A549 (cell line): ENCODE measurements at regions of chr16 and their contacts with region 1.

Region 1: GRCh38 chr16:24580665-24581064 is 41.3 kb downstream of the RBBP6 start:
- DNase-seq: peak; percentile 33 to 37
- ATAC-seq: peak in 1 of 2 experiments; percentile 54; a peak in 2 of 6 replicates
- H3K4me3 ChIP-seq: no peak overlapping the region
- H3K27ac ChIP-seq: peak overlapping the region in 1 of 2 experiments; percentile 37; a peak in 3 of 6 replicates
- H3K4me1 ChIP-seq: peaks cover 11% of the 10 kb centered on the region
- CTCF ChIP-seq: peak; percentile 61
- EP300 ChIP-seq: no peak
- POLR2A ChIP-seq: no peak
- RAD21 ChIP-seq: peak; percentile 80 to 85

Region 2: DNA sequence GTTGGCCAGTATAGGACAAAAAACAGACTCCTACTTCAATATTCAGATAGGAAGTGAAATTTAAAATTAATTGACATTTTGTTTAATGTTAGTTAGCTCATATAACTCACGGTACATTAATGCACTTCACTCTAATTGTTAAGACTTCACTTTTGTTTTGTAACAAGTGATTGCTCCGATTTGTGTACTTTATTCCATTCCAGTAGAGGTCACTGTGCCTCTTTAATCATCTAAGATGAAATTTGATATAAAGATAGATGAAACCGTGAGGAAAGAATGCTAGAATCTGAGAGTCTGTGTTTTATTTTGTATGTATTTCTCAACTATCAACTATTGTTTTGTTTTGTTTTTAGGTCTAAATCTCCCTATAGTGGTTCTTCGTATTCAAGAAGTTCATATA is 12.3 kb before region 1 on chr16:
- CTCF ChIA-PET with region 1: interaction called, 10 read pairs
- POLR2A ChIA-PET with region 1: no interaction called
- DNase-seq: peak in 1 of 2 experiments; percentile 53
- ATAC-seq: peak in 1 of 2 experiments; percentile 33; a peak in 1 of 6 replicates
- H3K4me3 ChIP-seq: no peak overlapping the region
- H3K27ac ChIP-seq: no peak overlapping the region
- H3K4me1 ChIP-seq: no peaks in the 10 kb centered on the region
- CTCF ChIP-seq: peak; percentile 65
- EP300 ChIP-seq: no peak
- POLR2A ChIP-seq: no peak
- RAD21 ChIP-seq: peak; percentile 69 to 70

Region 3: GRCh38 chr16:24652209-24652712 is 71.6 kb after region 1 on chr16:
- CTCF ChIA-PET with region 1: no interaction called
- POLR2A ChIA-PET with region 1: no interaction called
- DNase-seq: no peak
- ATAC-seq: no peak
- H3K4me3 ChIP-seq: no peak overlapping the region
- H3K27ac ChIP-seq: peak overlapping the region in 1 of 2 experiments; percentile 59; a peak in 3 of 6 replicates
- H3K4me1 ChIP-seq: peaks cover 18% of the 10 kb centered on the region
- CTCF ChIP-seq: no peak
- EP300 ChIP-seq: no peak
- POLR2A ChIP-seq: no peak
- RAD21 ChIP-seq: no peak

Region 4: GRCh38 chr16:24689145-24689544 is 108.5 kb after region 1 on chr16:
- CTCF ChIA-PET with region 1: interaction called, 31 read pairs
- POLR2A ChIA-PET with region 1: no interaction called
- DNase-seq: peak; percentile 60 to 85
- ATAC-seq: peak; percentile 89 to 91
- H3K4me3 ChIP-seq: no peak overlapping the region
- H3K27ac ChIP-seq: peak overlapping the region; percentile 25 to 67; a peak in 5 of 6 replicates
- H3K4me1 ChIP-seq: peaks cover 18% of the 10 kb centered on the region
- CTCF ChIP-seq: peak; percentile 82
- EP300 ChIP-seq: no peak
- POLR2A ChIP-seq: no peak
- RAD21 ChIP-seq: peak; percentile 78 to 85

Region 5: GRCh38 chr16:24800586-24800985 is 219.9 kb after region 1 on chr16:
- CTCF ChIA-PET with region 1: interaction called, 11 read pairs
- POLR2A ChIA-PET with region 1: no interaction called
- DNase-seq: peak; percentile 32 to 75
- ATAC-seq: peak; percentile 80 to 86
- H3K4me3 ChIP-seq: no peak overlapping the region
- H3K27ac ChIP-seq: 0 out of 6 replicates have a peak overlapping the region, but pooled peaks of 1 of the 2 experiments have one; percentile 4
- H3K4me1 ChIP-seq: no peaks in the 10 kb centered on the region
- CTCF ChIP-seq: peak; percentile 61
- EP300 ChIP-seq: no peak
- POLR2A ChIP-seq: no peak
- RAD21 ChIP-seq: peak; percentile 73 to 76